ENCODE measurements at regions of chr4 and their contacts with region 1.

Region 1: DNA sequence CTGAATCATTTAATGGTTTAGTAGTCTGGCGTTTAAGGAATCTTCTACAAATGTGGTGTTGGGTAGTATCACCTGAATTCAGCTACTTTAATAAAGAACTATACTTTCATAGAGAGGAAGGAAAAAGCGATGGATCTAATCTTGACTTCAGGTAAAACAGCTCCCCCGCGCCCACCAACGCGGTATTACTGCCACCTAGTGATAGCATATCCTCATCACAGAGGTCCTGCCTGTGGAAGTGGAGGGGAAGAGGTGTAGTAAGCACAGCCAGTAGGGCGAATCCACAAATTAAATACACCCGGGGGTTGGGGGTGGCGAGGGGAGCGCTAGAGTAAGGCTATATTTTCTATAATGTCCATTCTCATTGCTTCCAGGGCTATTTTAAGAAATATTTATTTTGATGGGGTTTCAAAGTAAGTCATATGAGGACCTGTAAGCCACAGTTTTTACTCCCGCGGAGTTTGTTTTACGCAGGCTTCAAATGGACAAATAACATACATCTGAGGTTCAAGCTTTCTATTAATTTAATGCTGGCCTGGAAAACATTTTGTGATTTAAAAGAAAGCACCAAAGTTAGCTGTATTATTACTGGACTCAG is 8.3 kb upstream of the DAPP1 start:
- DNase-seq: peak; percentile 53 to 82 (median 66)
- ATAC-seq: peak; percentile 98
- H3K4me3 ChIP-seq: no peak overlapping the region
- H3K4me3 Mint-ChIP-seq: no peak overlapping the region
- H3K27ac ChIP-seq: no peak overlapping the region
- H3K27ac Mint-ChIP-seq: no peak overlapping the region
- H3K4me1 ChIP-seq: peaks cover 3% of the 10 kb centered on the region
- H3K4me1 Mint-ChIP-seq: peaks cover 6% of the 10 kb centered on the region
- H3K27me3 ChIP-seq: no peaks in the 10 kb centered on the region
- H3K27me3 Mint-ChIP-seq: peaks cover 6% of the 10 kb centered on the region
- CTCF ChIP-seq: peak; percentile 85

Region 2: GRCh38 chr4:98143001-98143899 is 1665.1 kb before region 1 on chr4 and contains the start of gene STPG2:
- CTCF ChIA-PET with region 1: no interaction called
- POLR2A ChIA-PET with region 1: no interaction called
- intact Hi-C with region 1: loop called in 1 of 2 experiments (anchors 10 kb)
- DNase-seq: peak; percentile 85 to 97 (median 94)
- ATAC-seq: peak; percentile 98
- H3K4me3 ChIP-seq: peak within 1 kb of the TSS; percentile 88
- H3K4me3 Mint-ChIP-seq: peak within 1 kb of the TSS; percentile 90
- H3K27ac ChIP-seq: peak within 1 kb of the TSS; percentile 75 to 96
- H3K27ac Mint-ChIP-seq: peak within 1 kb of the TSS; percentile 93
- H3K4me1 ChIP-seq: peaks cover 17% of the 10 kb centered on the region
- H3K4me1 Mint-ChIP-seq: peaks cover 21% of the 10 kb centered on the region
- H3K27me3 ChIP-seq: no peaks in the 10 kb centered on the region
- H3K27me3 Mint-ChIP-seq: no peaks in the 10 kb centered on the region
- CTCF ChIP-seq: peak; percentile 73
- total RNA-seq, gene STPG2: 0.22 to 0.28 TPM

Region 3: DNA sequence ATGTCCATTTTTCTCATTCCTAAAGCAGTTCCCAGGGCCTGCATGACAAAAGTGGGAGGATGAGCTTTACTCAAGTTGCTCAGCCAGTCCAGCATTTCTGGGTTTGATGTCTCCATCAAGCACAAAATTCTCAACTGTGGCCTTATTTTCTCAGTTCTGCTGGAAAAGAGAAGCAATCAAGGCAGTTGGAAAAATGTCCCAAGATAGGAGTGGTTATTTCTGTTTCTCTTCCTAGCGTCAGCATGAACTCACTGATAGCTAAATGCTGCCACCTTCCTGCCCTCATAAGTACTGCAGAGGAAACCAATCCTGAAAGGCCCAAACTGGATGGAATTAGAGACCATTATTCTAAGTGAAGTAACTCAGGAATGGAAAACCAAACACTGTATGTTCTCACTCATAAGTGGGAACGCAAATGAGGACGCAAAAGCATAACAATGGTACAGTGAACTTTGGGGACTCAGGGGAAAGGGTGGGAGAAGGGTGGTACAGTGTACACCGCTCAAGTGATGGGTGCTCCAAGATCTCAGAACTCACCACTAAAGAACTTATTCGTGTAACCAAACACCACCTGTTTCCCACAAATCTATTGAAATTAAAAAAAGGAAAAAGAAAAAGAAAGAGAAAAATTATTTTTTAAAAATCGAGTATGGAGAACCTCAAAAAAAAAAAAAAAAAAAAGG is 402.8 kb before region 1 on chr4:
- CTCF ChIA-PET with region 1: no interaction called
- POLR2A ChIA-PET with region 1: no interaction called
- intact Hi-C with region 1: loop called in 1 of 2 experiments (anchors 10 kb)
- DNase-seq: peak; percentile 15 to 75 (median 48)
- ATAC-seq: peak; percentile 79
- H3K4me3 ChIP-seq: no peak overlapping the region
- H3K4me3 Mint-ChIP-seq: no peak overlapping the region
- H3K27ac ChIP-seq: no peak overlapping the region
- H3K27ac Mint-ChIP-seq: no peak overlapping the region
- H3K4me1 ChIP-seq: no peaks in the 10 kb centered on the region
- H3K4me1 Mint-ChIP-seq: peaks cover 5% of the 10 kb centered on the region
- H3K27me3 ChIP-seq: no peaks in the 10 kb centered on the region
- H3K27me3 Mint-ChIP-seq: no peaks in the 10 kb centered on the region
- CTCF ChIP-seq: peak; percentile 86

Region 4: DNA sequence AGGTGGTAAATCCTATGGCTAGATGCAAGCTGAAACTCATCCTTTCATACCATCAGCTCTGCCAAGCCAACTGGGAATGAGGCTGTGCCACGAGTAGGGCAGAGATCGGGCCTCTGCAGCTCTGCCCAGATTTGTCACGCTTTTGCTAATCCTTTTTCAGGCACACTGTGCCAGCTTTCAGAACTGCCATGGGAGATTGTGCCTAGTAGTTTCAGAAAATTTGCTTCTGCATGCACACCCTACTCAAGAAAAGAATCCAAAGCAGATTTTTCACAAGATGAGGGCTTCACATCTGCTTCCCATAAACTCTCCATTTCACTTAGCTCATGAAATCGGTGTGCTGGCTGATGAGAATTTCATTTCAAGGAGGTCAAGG is 370.0 kb before region 1 on chr4:
- CTCF ChIA-PET with region 1: no interaction called
- POLR2A ChIA-PET with region 1: no interaction called
- intact Hi-C with region 1: no loop called
- DNase-seq: no peak
- ATAC-seq: no peak
- H3K4me3 ChIP-seq: no peak overlapping the region
- H3K4me3 Mint-ChIP-seq: no peak overlapping the region
- H3K27ac ChIP-seq: no peak overlapping the region
- H3K27ac Mint-ChIP-seq: no peak overlapping the region
- H3K4me1 ChIP-seq: no peaks in the 10 kb centered on the region
- H3K4me1 Mint-ChIP-seq: no peaks in the 10 kb centered on the region
- H3K27me3 ChIP-seq: no peaks in the 10 kb centered on the region
- H3K27me3 Mint-ChIP-seq: no peaks in the 10 kb centered on the region
- CTCF ChIP-seq: no peak

Region 5: DNA sequence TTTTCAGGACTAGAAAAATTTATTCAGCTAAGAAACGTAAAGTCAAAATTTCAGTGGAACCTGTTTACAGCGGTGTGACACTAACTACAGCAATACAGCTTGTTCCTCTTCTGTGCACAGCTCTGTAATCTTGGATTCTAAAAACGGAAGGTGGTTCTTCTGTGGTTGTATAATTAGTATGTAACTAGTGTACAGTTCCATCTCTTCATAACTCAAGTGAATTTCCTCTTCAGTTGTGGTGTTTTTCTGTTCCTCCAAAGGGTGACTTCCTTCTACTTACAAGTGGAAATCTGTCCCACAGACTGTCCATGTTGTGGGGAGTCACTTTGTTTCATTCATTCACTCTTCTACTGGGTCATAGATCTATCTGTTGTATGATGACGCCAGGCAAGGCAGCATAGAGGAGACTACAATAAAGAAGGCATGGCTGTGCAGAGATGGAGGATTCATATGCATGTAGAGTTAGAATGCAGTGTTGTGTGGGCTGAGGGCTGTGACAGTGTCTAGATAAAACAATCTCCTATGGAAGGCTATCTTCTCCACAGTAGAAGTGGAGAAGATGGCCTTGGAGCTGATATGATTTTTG is 13.7 kb after region 1 on chr4:
- CTCF ChIA-PET with region 1: interaction called, 13 read pairs
- POLR2A ChIA-PET with region 1: interaction called, 6 read pairs
- intact Hi-C with region 1: no loop called
- DNase-seq: peak in 3 of 14 experiments; percentile 28 to 30 (median 29)
- ATAC-seq: peak; percentile 29
- H3K4me3 ChIP-seq: no peak overlapping the region
- H3K4me3 Mint-ChIP-seq: peak overlapping the region; percentile 40
- H3K27ac ChIP-seq: no peak overlapping the region
- H3K27ac Mint-ChIP-seq: peak overlapping the region; percentile 22
- H3K4me1 ChIP-seq: peaks cover 21% of the 10 kb centered on the region
- H3K4me1 Mint-ChIP-seq: peaks cover 88% of the 10 kb centered on the region
- H3K27me3 ChIP-seq: no peaks in the 10 kb centered on the region
- H3K27me3 Mint-ChIP-seq: no peaks in the 10 kb centered on the region
- CTCF ChIP-seq: no peak

Region 6: DNA sequence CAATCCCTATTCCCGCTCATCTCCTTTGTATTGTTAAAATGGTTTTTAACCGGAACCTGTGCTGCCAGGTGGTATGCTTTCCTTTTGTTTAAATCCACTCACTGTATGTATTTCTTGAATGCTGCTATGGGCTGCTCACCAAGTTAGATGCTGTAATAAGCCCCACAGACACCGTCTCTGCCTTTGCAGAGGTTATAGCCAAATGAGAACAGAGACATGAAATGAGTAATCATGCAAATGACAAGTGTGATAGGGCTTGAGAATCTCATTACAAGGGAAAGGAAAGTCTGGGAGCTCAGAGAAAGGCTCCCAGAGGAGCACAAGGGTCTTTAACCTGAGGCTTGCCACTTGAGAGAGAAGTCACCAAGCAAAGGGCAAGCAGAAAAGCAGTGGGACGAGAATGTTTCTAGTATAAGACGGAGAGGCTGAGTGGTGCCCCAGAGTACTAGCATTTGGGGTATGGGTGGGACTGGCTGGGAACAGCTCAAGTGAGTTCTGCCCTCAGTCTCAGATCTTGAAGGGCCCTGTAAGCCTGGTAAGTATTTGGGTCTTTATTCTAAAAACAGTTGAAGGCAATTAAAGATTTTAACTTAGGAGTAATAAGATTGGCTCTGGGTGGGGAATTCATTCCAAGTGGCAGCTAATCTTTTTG is 252.5 kb after region 1 on chr4:
- CTCF ChIA-PET with region 1: no interaction called
- POLR2A ChIA-PET with region 1: no interaction called
- intact Hi-C with region 1: loop called in 1 of 2 experiments (anchors 5 kb)
- DNase-seq: no peak
- ATAC-seq: no peak
- H3K4me3 ChIP-seq: no peak overlapping the region
- H3K4me3 Mint-ChIP-seq: no peak overlapping the region
- H3K27ac ChIP-seq: no peak overlapping the region
- H3K27ac Mint-ChIP-seq: no peak overlapping the region
- H3K4me1 ChIP-seq: no peaks in the 10 kb centered on the region
- H3K4me1 Mint-ChIP-seq: no peaks in the 10 kb centered on the region
- H3K27me3 ChIP-seq: peaks cover 0 to 3% of the 10 kb centered on the region in 2 experiments
- H3K27me3 Mint-ChIP-seq: peaks cover 22% of the 10 kb centered on the region
- CTCF ChIP-seq: no peak

Measured in CD4-positive, alpha-beta T cell (primary cell).